ENCODE measurements at regions of chr13 and their contacts with region 1.

Region 1: DNA sequence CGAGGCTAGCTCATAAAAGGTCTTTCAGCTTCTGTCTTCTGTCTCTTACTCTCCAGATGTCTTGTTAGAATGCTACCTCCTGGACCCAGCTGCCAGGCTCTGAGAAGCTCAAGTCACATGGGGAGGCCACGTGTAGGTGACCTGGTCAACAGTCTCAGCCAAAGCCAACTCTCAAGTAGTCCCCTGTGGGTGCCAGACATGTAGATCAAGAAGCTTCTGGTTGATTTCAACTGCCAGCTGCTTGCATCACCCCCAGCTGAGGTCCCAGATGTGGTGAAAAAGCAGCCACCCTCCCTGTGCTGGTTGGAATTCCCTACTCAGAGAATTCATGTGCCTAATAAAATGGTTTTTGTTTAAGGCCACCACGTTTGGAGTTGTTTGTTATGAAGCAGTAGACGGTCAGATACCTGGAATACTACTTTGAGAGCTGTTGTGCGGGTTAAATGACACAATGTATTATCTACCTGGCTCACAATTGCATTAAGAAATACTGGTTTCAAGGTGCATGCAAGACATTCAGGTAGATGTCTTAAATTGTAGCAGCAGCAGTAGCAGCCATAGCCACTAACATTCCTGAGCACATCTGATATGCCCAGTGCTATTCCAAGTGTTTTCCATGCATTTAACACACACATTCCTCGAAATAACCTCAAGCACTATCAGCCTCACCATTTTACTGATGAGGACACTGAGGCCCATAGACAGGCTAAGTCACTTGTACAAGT is 131.0 kb upstream of the RFC3 start:
- DNase-seq: no peak
- H3K4me3 ChIP-seq: no peak overlapping the region
- H3K27ac ChIP-seq: no peak overlapping the region
- H3K4me1 ChIP-seq: no peaks in the 10 kb centered on the region
- H3K27me3 ChIP-seq: no peaks in the 10 kb centered on the region
- CTCF ChIP-seq: no peak
- POLR2A ChIP-seq: no peak

Region 2: GRCh38 chr13:32315238-32316027 is 1371.5 kb before region 1 on chr13 and contains the starts of genes BRCA2 and ZAR1L:
- intact Hi-C with region 1: loop called (anchors 5 kb)
- DNase-seq: peak; percentile 83 to 84
- H3K4me3 ChIP-seq: peak within 1 kb of the TSS; percentile 59 to 79 (median 73)
- H3K27ac ChIP-seq: peak within 1 kb of the TSS; percentile 98 to 99
- H3K4me1 ChIP-seq: no peaks in the 10 kb centered on the region
- H3K27me3 ChIP-seq: no peaks in the 10 kb centered on the region
- CTCF ChIP-seq: peak in 1 of 3 donors; percentile 8
- POLR2A ChIP-seq: peak; percentile 35
- total RNA-seq, gene BRCA2: 0.98 to 3.5 (median 1.3) TPM
- total RNA-seq, gene ZAR1L: not detected

Measured in breast epithelium (tissue), 4 donors.